ENCODE measurements at regions of chr2 and their contacts with region 1.

Region 1: GRCh38 chr2:231521-232185 is 32.2 kb downstream of the SH3YL1 start:
- DNase-seq: no peak
- H3K4me3 Mint-ChIP-seq: no peak overlapping the region
- H3K27ac Mint-ChIP-seq: peak overlapping the region; percentile 69
- H3K4me1 Mint-ChIP-seq: peaks cover 37% of the 10 kb centered on the region
- H3K27me3 Mint-ChIP-seq: no peaks in the 10 kb centered on the region

Region 2: DNA sequence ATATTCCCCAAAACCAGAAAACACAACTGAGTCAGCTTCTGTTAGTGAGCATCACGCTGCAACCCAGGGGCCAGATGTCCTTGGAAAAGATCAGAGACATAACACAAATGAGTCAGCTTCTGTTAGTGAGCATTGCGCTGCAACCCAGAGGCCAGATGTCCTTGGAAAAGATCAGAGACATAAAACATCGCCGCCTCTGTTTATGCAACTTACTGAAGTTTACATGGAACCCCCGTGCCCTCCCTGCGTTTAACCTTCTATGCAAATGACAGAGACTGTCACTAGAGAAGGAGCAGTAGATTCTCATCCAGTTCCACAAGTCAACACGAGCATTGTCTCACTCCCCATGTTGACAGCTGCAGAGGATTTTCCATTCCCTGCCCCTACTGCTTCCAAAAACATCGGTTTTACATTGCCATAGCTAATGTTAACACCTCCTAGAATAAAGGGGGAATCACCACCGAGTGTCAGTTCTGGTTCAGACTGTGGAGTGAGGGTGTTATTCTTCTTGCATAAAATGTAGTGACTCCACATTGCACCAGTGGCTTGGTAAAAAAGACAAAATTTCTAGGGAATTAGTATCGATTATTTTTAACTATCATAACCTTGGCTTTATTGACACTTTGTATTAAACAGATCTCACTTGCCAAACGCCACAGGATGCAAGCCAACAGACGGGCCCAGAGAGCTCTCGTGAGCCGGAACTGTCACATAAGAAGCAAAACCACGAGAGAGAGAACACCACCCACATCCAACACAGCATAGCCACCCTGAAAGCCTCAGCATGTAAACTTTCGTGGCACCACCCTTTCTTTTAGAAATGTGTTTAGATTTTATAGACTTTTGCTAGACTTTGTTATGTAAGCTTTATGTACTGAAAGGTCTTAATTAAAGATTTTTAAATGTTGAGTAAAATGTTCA is 55.5 kb before region 1 on chr2:
- intact Hi-C with region 1: loop called (anchors 1 kb)
- DNase-seq: peak; percentile 38
- H3K4me3 Mint-ChIP-seq: peak overlapping the region; percentile 43
- H3K27ac Mint-ChIP-seq: peak overlapping the region; percentile 34
- H3K4me1 Mint-ChIP-seq: peaks cover 30% of the 10 kb centered on the region
- H3K27me3 Mint-ChIP-seq: peaks cover 2% of the 10 kb centered on the region

Region 3: GRCh38 chr2:1301056-1301455 is 1069.4 kb after region 1 on chr2:
- intact Hi-C with region 1: no loop called
- DNase-seq: no peak
- H3K4me3 Mint-ChIP-seq: no peak overlapping the region
- H3K27ac Mint-ChIP-seq: no peak overlapping the region
- H3K4me1 Mint-ChIP-seq: peaks cover 15% of the 10 kb centered on the region
- H3K27me3 Mint-ChIP-seq: no peaks in the 10 kb centered on the region